ENCODE measurements at regions of chr17 and their contacts with region 1.

Region 1: GRCh38 chr17:29883497-29883896 is 46.5 kb downstream of the SSH2 start:
- DNase-seq: no peak
- H3K4me3 ChIP-seq: no peak overlapping the region
- H3K27ac ChIP-seq: no peak overlapping the region
- H3K4me1 ChIP-seq: no peaks in the 10 kb centered on the region
- H3K27me3 ChIP-seq: no peaks in the 10 kb centered on the region
- CTCF ChIP-seq: no peak
- EP300 ChIP-seq: no peak
- POLR2A ChIP-seq: no peak

Region 2: GRCh38 chr17:29722411-29723198 is 160.9 kb before region 1 on chr17:
- intact Hi-C with region 1: no loop called
- DNase-seq: peak in 2 of 5 donors; percentile 22 to 64
- H3K4me3 ChIP-seq: peak overlapping the region; percentile 17
- H3K27ac ChIP-seq: peak overlapping the region in 1 of 2 donors; percentile 31
- H3K4me1 ChIP-seq: no peaks in the 10 kb centered on the region
- H3K27me3 ChIP-seq: no peaks in the 10 kb centered on the region
- CTCF ChIP-seq: no peak
- EP300 ChIP-seq: no peak
- POLR2A ChIP-seq: no peak

Region 3: DNA sequence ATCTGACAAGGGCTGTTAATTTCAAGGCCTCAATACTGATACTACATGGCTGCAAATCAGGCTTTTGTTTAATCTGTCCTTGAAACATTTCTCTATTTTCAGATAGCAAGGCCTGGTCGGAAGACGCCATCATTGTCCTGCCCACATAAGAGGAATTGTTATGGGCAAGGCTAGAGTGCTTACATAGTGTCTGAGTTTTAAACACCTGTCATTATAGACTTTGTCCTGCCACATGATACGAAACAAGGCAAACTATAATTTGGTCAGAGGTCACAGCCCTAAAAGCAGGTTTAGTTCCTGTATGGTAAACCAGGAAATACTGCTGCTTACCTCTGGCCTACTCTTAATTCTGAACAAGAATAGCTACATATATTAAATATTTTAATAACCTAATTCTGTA is 57.9 kb before region 1 on chr17:
- intact Hi-C with region 1: loop called in 1 of 4 experiments (anchors 10 kb)
- DNase-seq: no peak
- H3K4me3 ChIP-seq: no peak overlapping the region
- H3K27ac ChIP-seq: no peak overlapping the region
- H3K4me1 ChIP-seq: no peaks in the 10 kb centered on the region
- H3K27me3 ChIP-seq: no peaks in the 10 kb centered on the region
- CTCF ChIP-seq: no peak
- EP300 ChIP-seq: no peak
- POLR2A ChIP-seq: no peak